ENCODE measurements at regions of chr3 and their contacts with region 1.

Region 1: GRCh38 chr3:136196401-136197158 is 445 bp upstream of the MSL2 start:
- DNase-seq: peak; percentile 100
- H3K4me3 Mint-ChIP-seq: peak overlapping the region; percentile 100
- H3K27ac Mint-ChIP-seq: peak overlapping the region; percentile 94
- H3K4me1 Mint-ChIP-seq: peaks cover 17% of the 10 kb centered on the region
- H3K27me3 Mint-ChIP-seq: peaks cover 2% of the 10 kb centered on the region

Region 2: GRCh38 chr3:134239538-134239937 is 1957.0 kb before region 1 on chr3:
- CTCF ChIA-PET with region 1: no interaction called
- intact Hi-C with region 1: loop called (anchors 5 kb)
- DNase-seq: peak; percentile 45
- H3K4me3 Mint-ChIP-seq: peak overlapping the region; percentile 30
- H3K27ac Mint-ChIP-seq: peak overlapping the region; percentile 88
- H3K4me1 Mint-ChIP-seq: peaks cover 94% of the 10 kb centered on the region
- H3K27me3 Mint-ChIP-seq: no peaks in the 10 kb centered on the region

Region 3: GRCh38 chr3:136142592-136142991 is 54.0 kb before region 1 on chr3:
- CTCF ChIA-PET with region 1: no interaction called
- intact Hi-C with region 1: loop called (anchors 1 kb)
- DNase-seq: no peak
- H3K4me3 Mint-ChIP-seq: no peak overlapping the region
- H3K27ac Mint-ChIP-seq: no peak overlapping the region
- H3K4me1 Mint-ChIP-seq: peaks cover 27% of the 10 kb centered on the region
- H3K27me3 Mint-ChIP-seq: no peaks in the 10 kb centered on the region

Region 4: GRCh38 chr3:136239094-136239493 is 42.5 kb after region 1 on chr3:
- CTCF ChIA-PET with region 1: no interaction called
- intact Hi-C with region 1: no loop called
- DNase-seq: no peak
- H3K4me3 Mint-ChIP-seq: no peak overlapping the region
- H3K27ac Mint-ChIP-seq: no peak overlapping the region
- H3K4me1 Mint-ChIP-seq: no peaks in the 10 kb centered on the region
- H3K27me3 Mint-ChIP-seq: no peaks in the 10 kb centered on the region

Region 5: DNA sequence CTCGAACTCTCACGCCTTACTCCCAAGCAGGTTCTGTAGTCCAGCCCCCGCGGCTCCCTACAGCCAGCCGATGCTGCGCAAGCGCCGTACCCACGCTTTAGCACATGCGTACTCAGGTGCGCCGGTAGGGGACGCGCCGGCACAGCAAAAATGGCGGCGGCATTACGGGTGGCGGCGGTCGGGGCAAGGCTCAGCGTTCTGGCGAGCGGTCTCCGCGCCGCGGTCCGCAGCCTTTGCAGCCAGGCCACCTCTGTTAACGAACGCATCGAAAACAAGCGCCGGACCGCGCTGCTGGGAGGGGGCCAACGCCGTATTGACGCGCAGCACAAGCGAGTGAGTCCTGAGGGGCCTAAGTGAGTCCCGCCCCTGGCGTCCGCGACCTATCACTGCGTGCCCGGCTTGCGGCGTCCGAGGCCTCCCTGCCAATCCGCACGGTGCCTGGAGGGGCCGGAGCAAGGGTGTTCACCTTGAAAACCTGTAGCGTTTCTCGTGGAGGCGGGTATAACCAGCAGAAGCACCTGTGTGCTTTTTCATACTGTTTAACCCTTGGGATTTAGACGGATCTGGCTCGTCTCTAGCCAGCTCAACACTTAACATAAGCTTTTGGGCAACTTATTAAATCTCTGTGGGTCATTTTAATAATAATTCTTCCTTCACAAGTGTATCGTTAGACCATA is 53.8 kb after region 1 on chr3 and contains the start of gene PCCB:
- CTCF ChIA-PET with region 1: interaction called, 5 read pairs
- intact Hi-C with region 1: loop called (anchors 1 kb)
- DNase-seq: peak; percentile 95
- H3K4me3 Mint-ChIP-seq: peak within 1 kb of the TSS; percentile 83
- H3K27ac Mint-ChIP-seq: peak within 1 kb of the TSS; percentile 90
- H3K4me1 Mint-ChIP-seq: peaks cover 18% of the 10 kb centered on the region
- H3K27me3 Mint-ChIP-seq: no peaks in the 10 kb centered on the region
- total RNA-seq, gene PCCB: 86.0 to 87.6 TPM

Region 6: GRCh38 chr3:136270179-136270578 is 73.6 kb after region 1 on chr3:
- CTCF ChIA-PET with region 1: no interaction called
- intact Hi-C with region 1: no loop called
- DNase-seq: peak; percentile 18
- H3K4me3 Mint-ChIP-seq: no peak overlapping the region
- H3K27ac Mint-ChIP-seq: no peak overlapping the region
- H3K4me1 Mint-ChIP-seq: peaks cover 35% of the 10 kb centered on the region
- H3K27me3 Mint-ChIP-seq: no peaks in the 10 kb centered on the region

Region 7: GRCh38 chr3:136545664-136546268 is 349.2 kb after region 1 on chr3:
- CTCF ChIA-PET with region 1: no interaction called
- intact Hi-C with region 1: loop called (anchors 5 kb)
- DNase-seq: no peak
- H3K4me3 Mint-ChIP-seq: no peak overlapping the region
- H3K27ac Mint-ChIP-seq: no peak overlapping the region
- H3K4me1 Mint-ChIP-seq: peaks cover 12% of the 10 kb centered on the region
- H3K27me3 Mint-ChIP-seq: no peaks in the 10 kb centered on the region

Region 8: DNA sequence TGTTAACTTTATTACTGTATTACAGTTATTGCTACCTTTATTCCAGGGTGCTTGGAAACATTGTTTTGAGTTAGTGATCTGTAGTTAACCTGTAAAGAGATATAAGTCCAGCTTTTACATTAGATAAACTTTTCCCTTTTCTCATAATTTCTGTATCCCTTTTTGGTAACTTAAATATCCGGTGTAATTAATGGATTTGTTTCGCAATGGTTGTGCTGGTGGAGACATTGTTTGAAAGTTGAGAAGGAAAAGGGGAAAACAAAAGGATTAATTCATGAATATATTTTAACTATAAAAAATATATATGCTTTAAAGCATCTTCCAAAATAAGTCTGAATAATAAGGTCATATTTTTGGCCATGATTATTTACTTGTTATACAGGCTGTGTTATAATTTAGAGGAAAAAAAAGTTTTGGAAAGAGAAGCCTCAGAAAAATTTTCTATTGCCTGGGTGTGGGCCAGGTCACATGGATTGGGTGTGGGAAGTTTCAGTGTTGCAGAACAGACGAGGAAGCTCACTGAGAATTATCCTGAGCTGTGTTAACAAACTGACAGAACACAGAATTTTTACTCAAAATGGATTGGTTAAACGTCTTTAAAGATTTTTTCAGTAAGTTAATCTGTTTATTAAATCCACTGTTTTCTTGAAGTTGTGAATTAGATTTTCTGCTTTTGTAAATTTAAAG is 733.5 kb after region 1 on chr3:
- CTCF ChIA-PET with region 1: no interaction called
- intact Hi-C with region 1: loop called (anchors 5 kb)
- DNase-seq: no peak
- H3K4me3 Mint-ChIP-seq: no peak overlapping the region
- H3K27ac Mint-ChIP-seq: no peak overlapping the region
- H3K4me1 Mint-ChIP-seq: peaks cover 51% of the 10 kb centered on the region
- H3K27me3 Mint-ChIP-seq: no peaks in the 10 kb centered on the region

Measured in activated naive CD4-positive, alpha-beta T cell treated with anti-CD3 and anti-CD28 coated beads for 36 hours (primary cell).